Activated CD4-positive, alpha-beta memory T cell treated with anti-CD3 and anti-CD28 coated beads for 36 hours (primary cell): ENCODE measurements at regions of chr5 and their contacts with region 1.

Region 1: GRCh38 chr5:129767906-129768380 is 20.0 kb downstream of the MINAR2 start:
- DNase-seq: peak; percentile 76
- H3K4me3 Mint-ChIP-seq: no peak overlapping the region
- H3K27ac Mint-ChIP-seq: no peak overlapping the region
- H3K4me1 Mint-ChIP-seq: peaks cover 2% of the 10 kb centered on the region
- H3K27me3 Mint-ChIP-seq: peaks cover 3% of the 10 kb centered on the region

Region 2: GRCh38 chr5:128905571-128906110 is 862.3 kb before region 1 on chr5:
- CTCF ChIA-PET with region 1: interaction called, 29 read pairs
- POLR2A ChIA-PET with region 1: no interaction called
- intact Hi-C with region 1: loop called (anchors 1 kb)
- DNase-seq: peak; percentile 33
- H3K4me3 Mint-ChIP-seq: no peak overlapping the region
- H3K27ac Mint-ChIP-seq: no peak overlapping the region
- H3K4me1 Mint-ChIP-seq: no peaks in the 10 kb centered on the region
- H3K27me3 Mint-ChIP-seq: peaks cover under 1% of the 10 kb centered on the region

Region 3: GRCh38 chr5:129172580-129172979 is 595.4 kb before region 1 on chr5:
- CTCF ChIA-PET with region 1: no interaction called
- POLR2A ChIA-PET with region 1: no interaction called
- intact Hi-C with region 1: loop called (anchors 2 kb)
- DNase-seq: no peak
- H3K4me3 Mint-ChIP-seq: no peak overlapping the region
- H3K27ac Mint-ChIP-seq: no peak overlapping the region
- H3K4me1 Mint-ChIP-seq: no peaks in the 10 kb centered on the region
- H3K27me3 Mint-ChIP-seq: no peaks in the 10 kb centered on the region

Region 4: DNA sequence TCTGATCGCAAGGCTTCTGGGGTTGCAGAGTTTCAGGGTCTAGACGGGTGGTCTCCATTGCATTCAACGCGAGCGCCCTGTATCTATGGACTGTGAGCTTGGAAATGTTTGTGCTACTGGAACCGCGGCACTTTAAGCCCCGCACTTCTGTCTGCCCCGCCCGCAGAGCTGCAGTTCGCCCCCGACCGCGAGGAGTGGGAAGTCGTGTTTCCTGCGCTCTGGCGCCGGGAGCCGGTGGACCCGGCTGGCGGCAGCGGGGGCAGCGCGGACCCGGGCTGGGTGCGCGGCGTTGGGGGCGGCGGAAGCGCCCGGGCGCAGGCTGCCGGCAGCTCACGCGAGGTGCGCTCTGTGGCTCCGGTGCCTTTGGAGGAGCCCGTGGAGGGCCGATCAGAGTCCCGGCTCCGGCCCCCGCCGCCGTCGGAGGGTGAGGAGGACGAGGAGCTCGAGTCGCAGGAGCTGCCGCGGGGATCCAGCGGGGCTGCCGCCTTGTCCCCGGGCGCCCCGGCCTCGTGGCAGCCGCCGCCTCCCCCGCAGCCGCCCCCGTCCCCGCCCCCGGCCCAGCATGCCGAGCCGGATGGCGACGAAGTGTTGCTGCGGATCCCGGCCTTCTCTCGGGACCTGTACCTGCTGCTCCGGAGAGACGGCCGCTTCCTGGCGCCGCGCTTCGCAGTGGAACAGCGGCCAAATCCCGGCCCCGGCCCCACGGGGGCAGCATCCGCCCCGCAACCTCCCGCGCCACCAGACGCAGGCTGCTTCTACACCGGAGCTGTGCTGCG is 306.8 kb before region 1 on chr5:
- CTCF ChIA-PET with region 1: interaction called, 3 read pairs
- POLR2A ChIA-PET with region 1: no interaction called
- intact Hi-C with region 1: loop called (anchors 2 kb)
- DNase-seq: peak; percentile 41
- H3K4me3 Mint-ChIP-seq: no peak overlapping the region
- H3K27ac Mint-ChIP-seq: no peak overlapping the region
- H3K4me1 Mint-ChIP-seq: peaks cover 12% of the 10 kb centered on the region
- H3K27me3 Mint-ChIP-seq: peaks cover 32% of the 10 kb centered on the region

Region 5: GRCh38 chr5:129631961-129632360 is 136.0 kb before region 1 on chr5:
- CTCF ChIA-PET with region 1: no interaction called
- POLR2A ChIA-PET with region 1: no interaction called
- intact Hi-C with region 1: no loop called
- DNase-seq: no peak
- H3K4me3 Mint-ChIP-seq: no peak overlapping the region
- H3K27ac Mint-ChIP-seq: no peak overlapping the region
- H3K4me1 Mint-ChIP-seq: no peaks in the 10 kb centered on the region
- H3K27me3 Mint-ChIP-seq: no peaks in the 10 kb centered on the region

Region 6: GRCh38 chr5:129852747-129853352 is 84.9 kb after region 1 on chr5:
- CTCF ChIA-PET with region 1: interaction called, 141 read pairs
- POLR2A ChIA-PET with region 1: no interaction called
- intact Hi-C with region 1: loop called (anchors 1 kb)
- DNase-seq: peak; percentile 80
- H3K4me3 Mint-ChIP-seq: no peak overlapping the region
- H3K27ac Mint-ChIP-seq: no peak overlapping the region
- H3K4me1 Mint-ChIP-seq: peaks cover 2% of the 10 kb centered on the region
- H3K27me3 Mint-ChIP-seq: peaks cover 5% of the 10 kb centered on the region

Region 7: GRCh38 chr5:130678637-130679036 is 910.7 kb after region 1 on chr5:
- CTCF ChIA-PET with region 1: no interaction called
- POLR2A ChIA-PET with region 1: no interaction called
- intact Hi-C with region 1: no loop called
- DNase-seq: no peak
- H3K4me3 Mint-ChIP-seq: no peak overlapping the region
- H3K27ac Mint-ChIP-seq: no peak overlapping the region
- H3K4me1 Mint-ChIP-seq: no peaks in the 10 kb centered on the region
- H3K27me3 Mint-ChIP-seq: peaks cover 2% of the 10 kb centered on the region

Region 8: DNA sequence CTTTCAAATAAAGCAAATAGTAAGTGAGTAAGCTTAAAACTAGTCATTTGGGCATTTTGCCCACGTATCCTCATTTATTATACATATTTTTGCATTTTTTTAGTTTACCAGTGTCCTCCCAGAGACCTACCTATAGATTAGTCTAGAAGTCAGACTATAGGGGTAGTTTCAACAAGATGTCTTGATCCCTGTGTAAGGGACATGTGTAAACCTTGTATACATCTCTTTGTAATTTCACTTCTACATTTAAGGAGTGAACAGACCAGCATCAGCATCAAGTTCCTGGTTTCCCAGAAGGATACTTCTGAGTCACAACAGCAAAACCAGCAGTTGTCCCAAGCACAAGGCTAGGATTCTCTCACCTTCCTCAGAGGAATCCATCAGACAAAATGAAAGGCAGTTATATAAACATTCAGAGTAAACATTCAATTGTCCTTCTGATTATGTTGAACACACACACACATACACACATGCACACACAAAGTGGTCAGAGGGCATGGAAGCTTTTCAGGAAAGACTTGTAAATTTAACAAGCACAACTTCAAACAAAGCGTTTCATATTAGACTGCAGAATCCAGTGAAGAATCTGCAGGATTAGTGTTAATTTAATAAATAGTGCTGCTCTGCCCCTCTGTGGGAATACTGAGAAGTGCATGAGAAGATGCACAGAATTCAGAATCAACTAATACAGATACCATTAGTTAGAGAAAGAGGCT is 1341.8 kb after region 1 on chr5:
- CTCF ChIA-PET with region 1: interaction called, 10 read pairs
- POLR2A ChIA-PET with region 1: no interaction called
- intact Hi-C with region 1: loop called (anchors 2 kb)
- DNase-seq: no peak
- H3K4me3 Mint-ChIP-seq: no peak overlapping the region
- H3K27ac Mint-ChIP-seq: no peak overlapping the region
- H3K4me1 Mint-ChIP-seq: peaks cover 3% of the 10 kb centered on the region
- H3K27me3 Mint-ChIP-seq: no peaks in the 10 kb centered on the region